Activated naive CD4-positive, alpha-beta T cell treated with anti-CD3 and anti-CD28 coated beads for 36 hours (primary cell): ENCODE measurements at regions of chr1 and their contacts with region 1.

Region 1: DNA sequence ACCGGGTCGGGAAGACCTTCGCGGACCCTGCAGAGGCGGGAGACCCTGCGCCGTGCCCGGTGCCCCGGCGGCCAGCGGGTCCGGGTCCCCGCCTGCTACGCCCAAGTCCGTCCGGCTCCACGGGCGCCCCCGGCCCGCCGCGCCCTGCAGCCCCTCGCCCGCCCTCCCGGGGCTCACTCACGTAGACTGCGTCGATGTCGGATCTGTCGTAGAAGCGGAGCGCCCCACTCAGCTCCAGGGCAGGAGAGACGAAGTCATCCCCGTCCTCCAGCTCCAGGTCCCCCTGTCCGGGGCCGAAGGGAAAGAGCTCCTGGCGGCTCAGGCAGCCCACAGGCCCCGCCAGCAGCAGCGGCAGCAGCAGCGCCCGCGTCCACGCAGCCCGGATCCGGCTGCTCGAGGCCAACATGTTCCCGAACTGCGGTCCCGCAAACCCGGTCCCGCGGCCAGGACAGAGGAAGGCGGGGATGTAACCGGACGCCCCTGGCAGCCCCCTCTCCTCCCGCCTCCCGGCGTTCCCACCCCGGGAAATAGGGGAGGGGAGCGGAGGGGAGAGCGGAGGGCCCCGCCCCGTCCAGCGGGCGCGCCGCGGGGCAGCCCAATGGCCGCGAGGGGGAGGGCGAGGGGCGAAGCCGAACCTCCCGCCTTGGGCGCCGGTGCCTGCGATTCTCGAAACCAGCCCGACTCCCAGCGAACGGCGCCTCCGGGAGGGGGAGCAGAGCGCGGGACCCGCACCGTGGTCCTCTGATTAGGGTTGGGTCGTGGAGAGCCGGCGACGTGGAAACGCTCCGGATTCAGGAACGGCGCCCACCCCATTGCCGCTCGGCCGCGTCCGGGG is at the start of gene NID1:
- DNase-seq: peak; percentile 25
- H3K4me3 Mint-ChIP-seq: peak within 1 kb of the TSS; percentile 63
- H3K27ac Mint-ChIP-seq: no peak within 1 kb of the TSS
- H3K4me1 Mint-ChIP-seq: peaks cover 26% of the 10 kb centered on the region
- H3K27me3 Mint-ChIP-seq: peaks cover 38% of the 10 kb centered on the region
- total RNA-seq, gene NID1: 0.10 TPM in 1 of 2 experiments, not detected in the other

Region 2: GRCh38 chr1:235648954-235649367 is 415.9 kb before region 1 on chr1:
- CTCF ChIA-PET with region 1: no interaction called
- intact Hi-C with region 1: loop called (anchors 10 kb)
- DNase-seq: peak; percentile 80
- H3K4me3 Mint-ChIP-seq: peak overlapping the region; percentile 81
- H3K27ac Mint-ChIP-seq: no peak overlapping the region
- H3K4me1 Mint-ChIP-seq: peaks cover 11% of the 10 kb centered on the region
- H3K27me3 Mint-ChIP-seq: peaks cover 68% of the 10 kb centered on the region

Region 3: GRCh38 chr1:235809688-235810397 is 255.0 kb before region 1 on chr1:
- CTCF ChIA-PET with region 1: no interaction called
- intact Hi-C with region 1: loop called (anchors 10 kb)
- DNase-seq: no peak
- H3K4me3 Mint-ChIP-seq: no peak overlapping the region
- H3K27ac Mint-ChIP-seq: no peak overlapping the region
- H3K4me1 Mint-ChIP-seq: no peaks in the 10 kb centered on the region
- H3K27me3 Mint-ChIP-seq: no peaks in the 10 kb centered on the region

Region 4: GRCh38 chr1:235831148-235831547 is 233.7 kb before region 1 on chr1:
- CTCF ChIA-PET with region 1: no interaction called
- intact Hi-C with region 1: no loop called
- DNase-seq: peak; percentile 63
- H3K4me3 Mint-ChIP-seq: no peak overlapping the region
- H3K27ac Mint-ChIP-seq: no peak overlapping the region
- H3K4me1 Mint-ChIP-seq: peaks cover 13% of the 10 kb centered on the region
- H3K27me3 Mint-ChIP-seq: no peaks in the 10 kb centered on the region